CD8-positive, alpha-beta memory T cell (primary cell): ENCODE measurements at regions of chr1 and their contacts with region 1.

Region 1: GRCh38 chr1:207052911-207053769 is at the start of gene PFKFB2:
- DNase-seq: peak; percentile 90 to 97 (median 93)
- H3K4me3 ChIP-seq: peak within 1 kb of the TSS; percentile 86
- H3K4me3 Mint-ChIP-seq: peak within 1 kb of the TSS; percentile 97 to 100 (median 98)
- H3K27ac ChIP-seq: peak within 1 kb of the TSS; percentile 91
- H3K27ac Mint-ChIP-seq: peak within 1 kb of the TSS; percentile 84 to 99 (median 94)
- H3K4me1 ChIP-seq: peaks cover 29% of the 10 kb centered on the region
- H3K4me1 Mint-ChIP-seq: peaks cover 37 to 53% (median 43%) of the 10 kb centered on the region in 3 donors
- H3K27me3 ChIP-seq: no peaks in the 10 kb centered on the region
- H3K27me3 Mint-ChIP-seq: peaks cover 1 to 4% of the 10 kb centered on the region in 2 donors
- total RNA-seq, gene PFKFB2: 3.0 to 3.9 TPM

Region 2: DNA sequence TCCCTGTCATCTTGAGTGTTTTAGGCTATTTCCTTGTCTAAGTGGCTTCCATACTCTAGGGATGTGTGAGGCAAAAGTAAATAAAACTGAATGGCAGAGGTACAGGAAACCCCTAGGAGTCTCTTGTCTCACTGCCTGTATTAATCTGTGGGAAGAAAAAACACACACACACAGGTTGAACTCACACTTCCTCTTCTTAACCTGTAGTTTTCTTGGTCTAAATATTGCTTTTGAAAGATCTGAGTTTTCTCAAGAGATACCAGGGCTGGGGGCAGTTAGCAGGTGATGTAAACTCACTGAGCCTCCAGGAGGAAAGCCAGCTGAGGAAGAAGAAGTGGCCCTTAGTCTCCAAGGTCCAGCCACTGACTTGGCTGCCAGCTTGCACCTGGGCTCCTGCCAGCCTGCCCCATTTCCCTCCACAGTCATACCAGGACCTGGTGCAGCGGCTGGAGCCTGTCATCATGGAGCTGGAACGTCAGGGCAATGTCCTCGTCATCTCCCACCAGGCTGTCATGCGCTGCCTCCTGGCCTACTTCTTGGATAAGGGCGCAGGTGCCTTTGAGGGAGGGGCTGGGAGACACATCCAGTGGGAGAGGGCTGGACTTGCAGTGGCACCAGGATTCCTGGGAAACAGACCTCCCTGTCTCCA is 16.8 kb after region 1 on chr1:
- CTCF ChIA-PET with region 1: interaction called, 21 read pairs
- POLR2A ChIA-PET with region 1: interaction called, 3 read pairs
- DNase-seq: no peak
- H3K4me3 ChIP-seq: no peak overlapping the region
- H3K4me3 Mint-ChIP-seq: no peak overlapping the region
- H3K27ac ChIP-seq: no peak overlapping the region
- H3K27ac Mint-ChIP-seq: peak overlapping the region in 3 of 8 donors; percentile 7 to 47 (median 17)
- H3K4me1 ChIP-seq: peaks cover 31% of the 10 kb centered on the region
- H3K4me1 Mint-ChIP-seq: peaks cover 23 to 30% (median 29%) of the 10 kb centered on the region in 3 donors
- H3K27me3 ChIP-seq: no peaks in the 10 kb centered on the region
- H3K27me3 Mint-ChIP-seq: no peaks in the 10 kb centered on the region

Region 3: DNA sequence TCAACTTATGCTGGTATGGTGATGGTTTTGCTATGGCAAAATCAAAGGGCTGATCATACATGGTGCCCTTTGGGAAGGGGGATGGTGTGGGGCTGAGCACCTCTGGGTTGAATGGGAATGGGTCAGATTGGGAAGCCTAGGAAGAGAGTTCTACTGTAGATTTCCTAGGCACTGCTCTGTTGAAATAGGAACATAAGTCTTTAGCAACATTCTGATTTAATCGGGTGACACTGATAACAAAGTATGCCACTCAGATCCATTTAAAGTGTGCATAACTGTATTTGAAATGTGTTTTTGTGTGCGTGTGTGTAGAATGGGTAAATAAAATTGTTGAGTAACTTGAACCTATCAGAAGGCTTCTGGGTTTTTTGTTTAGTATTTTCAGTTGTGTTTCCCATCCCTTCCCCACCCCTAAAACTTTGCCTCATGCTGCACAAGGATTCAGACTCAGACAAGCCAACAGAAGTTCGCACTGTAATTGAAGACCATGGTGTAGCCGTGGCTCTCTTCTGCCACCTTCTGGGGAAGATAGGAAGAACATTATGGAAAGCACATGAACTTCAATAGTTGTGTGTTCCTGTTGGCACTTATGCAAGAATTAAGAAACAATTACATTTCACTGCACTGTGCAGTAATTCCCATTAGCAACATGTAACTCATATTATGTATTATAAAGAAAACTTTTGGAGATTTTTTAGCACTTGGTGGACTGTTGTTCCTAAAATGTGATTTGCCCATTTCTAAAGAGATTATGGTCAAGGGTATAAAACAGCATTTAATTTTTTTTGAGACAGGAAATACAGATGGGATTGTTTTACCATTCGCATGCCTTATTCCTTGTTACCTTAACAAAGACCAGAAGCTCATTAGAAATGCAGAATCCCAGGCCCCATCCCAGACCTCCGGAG is 24.6 kb after region 1 on chr1:
- CTCF ChIA-PET with region 1: interaction called, 21 read pairs
- POLR2A ChIA-PET with region 1: no interaction called
- DNase-seq: peak; percentile 18 to 73 (median 57)
- H3K4me3 ChIP-seq: no peak overlapping the region
- H3K4me3 Mint-ChIP-seq: no peak overlapping the region
- H3K27ac ChIP-seq: no peak overlapping the region
- H3K27ac Mint-ChIP-seq: peak overlapping the region in 1 of 8 donors; percentile 45
- H3K4me1 ChIP-seq: no peaks in the 10 kb centered on the region
- H3K4me1 Mint-ChIP-seq: peaks cover 0 to 1% (median 0%) of the 10 kb centered on the region in 3 donors
- H3K27me3 ChIP-seq: no peaks in the 10 kb centered on the region
- H3K27me3 Mint-ChIP-seq: peaks cover 6 to 32% of the 10 kb centered on the region in 2 donors